HepG2 (cell line): ENCODE measurements at regions of chr3 and their contacts with region 1.

Region 1: DNA sequence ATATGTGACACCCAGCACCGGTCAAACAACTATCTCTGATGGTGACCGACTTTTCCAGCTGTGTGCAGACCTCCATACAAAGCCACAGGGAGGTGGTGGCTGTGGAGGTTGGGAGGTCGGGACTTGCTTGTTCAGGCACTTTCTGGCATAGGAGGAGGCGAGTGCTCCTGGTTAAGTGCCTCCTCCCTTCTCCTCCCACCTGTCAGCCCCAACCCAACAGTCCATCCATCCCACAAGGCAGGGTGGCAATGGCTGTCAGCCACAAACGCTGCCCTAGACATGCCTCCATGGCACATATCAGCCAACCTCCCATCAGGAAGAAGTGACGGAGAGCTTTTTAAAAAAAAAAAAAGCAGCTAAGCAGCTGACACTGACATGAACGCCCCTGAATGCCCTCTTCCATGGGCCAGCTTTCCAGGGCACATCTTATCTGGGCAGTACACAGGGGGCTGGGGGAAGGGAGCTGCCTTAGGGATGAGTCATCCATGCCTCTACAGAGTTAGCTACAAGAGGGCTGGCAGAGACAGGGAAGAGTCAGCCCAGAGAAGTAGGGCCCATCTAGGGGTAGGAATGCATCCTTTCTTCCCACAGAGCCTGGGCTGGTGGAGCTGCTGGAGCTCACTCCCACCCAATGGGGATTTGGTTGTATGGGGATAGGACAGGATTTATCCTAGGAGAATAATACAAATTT is 41.2 kb downstream of the CCDC12 start:
- DNase-seq: peak; percentile 92
- ATAC-seq: peak; percentile 90
- H3K4me3 ChIP-seq: no peak overlapping the region
- H3K27ac ChIP-seq: peak overlapping the region; percentile 12
- H3K4me1 ChIP-seq: peaks cover 92% of the 10 kb centered on the region
- H3K27me3 ChIP-seq: no peaks in the 10 kb centered on the region
- CTCF ChIP-seq: peak; percentile 64
- EP300 ChIP-seq: peak in 1 of 2 experiments; percentile 31; a peak in 1 of 4 replicates
- POLR2A ChIP-seq: no peak
- RAD21 ChIP-seq: peak; percentile 58

Region 2: DNA sequence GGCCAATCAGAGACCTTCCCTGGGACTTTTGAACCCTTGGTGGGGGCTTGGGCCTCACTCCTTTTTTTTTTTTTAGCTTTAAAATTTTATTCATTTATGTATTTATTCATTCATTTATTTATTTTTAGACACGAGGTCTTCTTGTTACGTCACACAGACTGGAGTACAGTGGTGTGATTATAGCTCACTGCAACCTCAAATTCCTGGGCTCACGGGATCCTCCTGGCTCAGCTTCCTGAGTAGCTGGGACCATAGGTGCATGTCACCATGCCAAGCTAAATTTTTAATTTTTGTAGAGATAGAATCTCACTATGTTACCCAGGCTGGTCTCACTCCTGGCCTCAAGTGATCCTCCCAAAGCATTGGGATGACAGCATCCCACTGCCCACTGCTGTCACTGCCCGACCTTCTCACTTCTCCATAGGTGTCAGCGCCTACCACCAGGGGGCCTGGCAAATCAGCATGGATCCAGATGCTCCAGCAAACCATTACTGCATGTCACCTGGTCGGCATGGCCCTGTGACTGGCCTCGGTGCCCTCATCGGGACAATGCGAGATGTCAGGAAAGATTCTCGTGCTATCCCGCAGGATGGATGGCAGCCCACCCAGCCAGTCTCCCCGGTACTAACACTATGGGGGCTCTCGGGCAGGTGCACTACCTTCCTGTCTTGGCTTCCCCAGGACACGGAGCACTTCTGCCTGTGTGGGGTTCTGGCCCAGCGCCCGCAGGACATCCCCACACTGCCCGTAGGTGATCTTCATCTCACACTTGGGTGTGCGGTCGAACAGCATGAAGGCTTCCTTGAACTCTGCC is 75.1 kb before region 1 on chr3:
- CTCF ChIA-PET with region 1: no interaction called
- POLR2A ChIA-PET with region 1: no interaction called
- in situ Hi-C with region 1: no loop called
- intact Hi-C with region 1: no loop called
- DNase-seq: peak; percentile 44
- ATAC-seq: peak; percentile 85
- H3K4me3 ChIP-seq: no peak overlapping the region
- H3K27ac ChIP-seq: no peak overlapping the region
- H3K4me1 ChIP-seq: peaks cover 27% of the 10 kb centered on the region
- H3K27me3 ChIP-seq: peaks cover 5 to 17% of the 10 kb centered on the region in 2 experiments; a peak in 3 of 5 replicates
- CTCF ChIP-seq: peak; percentile 75
- EP300 ChIP-seq: no peak
- POLR2A ChIP-seq: no peak
- RAD21 ChIP-seq: peak; percentile 42; the same call in 1 of the 2 replicates

Region 3: GRCh38 chr3:46976326-46977190 is 41.2 kb after region 1 on chr3 and contains the start of gene CCDC12:
- CTCF ChIA-PET with region 1: no interaction called
- POLR2A ChIA-PET with region 1: interaction called, 19 read pairs
- in situ Hi-C with region 1: loop called (anchors 5 kb)
- intact Hi-C with region 1: no loop called
- DNase-seq: peak; percentile 98
- ATAC-seq: peak; percentile 79
- H3K4me3 ChIP-seq: peak within 1 kb of the TSS; percentile 69 to 98 (median 79); a peak in 5 of 6 replicates
- H3K27ac ChIP-seq: peak within 1 kb of the TSS; percentile 97
- H3K4me1 ChIP-seq: peaks cover 70% of the 10 kb centered on the region
- H3K27me3 ChIP-seq: no peaks in the 10 kb centered on the region; a peak in 1 of 5 replicates
- CTCF ChIP-seq: no peak
- EP300 ChIP-seq: no peak
- POLR2A ChIP-seq: peak in 1 of 2 experiments; percentile 85; a peak in 2 of 4 replicates
- RAD21 ChIP-seq: no peak
- total RNA-seq, gene CCDC12: 49.5 and 55.2 TPM in 2 replicates